Dorsolateral prefrontal cortex (tissue), 120 donors: ENCODE measurements at regions of chr19 and their contacts with region 1.

Region 1: DNA sequence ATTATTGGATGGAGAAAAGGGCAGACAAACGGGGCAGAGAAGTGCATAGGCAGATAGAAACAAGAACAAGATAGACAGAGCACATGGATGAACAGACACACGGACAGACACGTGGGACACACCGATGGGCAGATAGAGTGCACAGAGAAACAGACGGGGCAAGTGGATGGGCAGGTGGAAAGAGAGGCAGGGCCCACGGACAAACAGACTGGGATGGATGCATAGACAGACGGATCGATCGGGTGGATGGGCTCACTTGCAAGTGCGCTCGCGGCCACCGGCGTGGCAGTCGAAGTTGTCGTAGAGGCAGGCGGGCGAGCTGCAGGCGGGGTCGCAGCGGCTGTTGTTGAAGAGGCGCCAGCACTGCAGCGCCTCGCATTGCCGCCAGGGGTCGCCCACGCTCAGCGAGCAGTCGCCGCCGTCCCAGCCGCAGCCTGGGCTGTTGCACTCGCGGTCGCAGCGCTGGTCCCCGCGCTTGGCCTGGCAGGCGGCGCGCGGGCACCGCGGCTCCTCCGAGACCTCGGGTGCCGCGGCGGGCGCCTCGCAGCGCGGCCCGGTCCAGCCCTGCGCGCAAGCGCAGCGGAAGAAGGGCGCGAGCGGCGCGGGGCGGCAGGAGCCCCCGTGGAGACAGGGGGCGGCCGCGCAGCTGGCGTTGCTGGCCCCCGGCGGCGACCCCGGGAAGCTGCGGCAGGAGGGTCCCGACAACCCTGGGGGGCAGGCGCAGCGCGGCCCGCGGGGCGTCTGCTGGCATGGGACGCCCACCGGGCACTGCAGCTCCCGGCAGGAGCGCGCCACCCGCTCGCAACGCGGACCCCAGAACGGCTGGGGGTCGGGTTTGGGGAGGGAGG is 23.3 kb downstream of the NOTCH3 start:
- DNase-seq: peak; percentile 61 to 88 (median 74)
- H3K4me3 ChIP-seq: peak overlapping the region in 50 of 59 donors; percentile 14 to 61 (median 40)
- H3K27ac ChIP-seq: no peak overlapping the region
- H3K27me3 ChIP-seq: no peaks in the 10 kb centered on the region
- CTCF ChIP-seq: peak; percentile 67 to 99 (median 96)

Region 2: GRCh38 chr19:15062036-15062435 is 115.5 kb before region 1 on chr19:
- intact Hi-C with region 1: no loop called
- DNase-seq: no peak
- H3K4me3 ChIP-seq: no peak overlapping the region
- H3K27ac ChIP-seq: no peak overlapping the region
- H3K27me3 ChIP-seq: peaks cover 0 to 20% (median 3%) of the 10 kb centered on the region in 45 donors
- CTCF ChIP-seq: no peak

Region 3: GRCh38 chr19:15222738-15223648 is 45.5 kb after region 1 on chr19:
- intact Hi-C with region 1: loop called in 1 of 2 experiments (anchors 5 kb)
- DNase-seq: peak; percentile 78 to 95 (median 89)
- H3K4me3 ChIP-seq: peak overlapping the region; percentile 49 to 86 (median 75)
- H3K27ac ChIP-seq: peak overlapping the region in 31 of 59 donors; percentile 2 to 85 (median 69)
- H3K27me3 ChIP-seq: no peaks in the 10 kb centered on the region
- CTCF ChIP-seq: peak in 1 of 56 donors; percentile 12

Region 4: DNA sequence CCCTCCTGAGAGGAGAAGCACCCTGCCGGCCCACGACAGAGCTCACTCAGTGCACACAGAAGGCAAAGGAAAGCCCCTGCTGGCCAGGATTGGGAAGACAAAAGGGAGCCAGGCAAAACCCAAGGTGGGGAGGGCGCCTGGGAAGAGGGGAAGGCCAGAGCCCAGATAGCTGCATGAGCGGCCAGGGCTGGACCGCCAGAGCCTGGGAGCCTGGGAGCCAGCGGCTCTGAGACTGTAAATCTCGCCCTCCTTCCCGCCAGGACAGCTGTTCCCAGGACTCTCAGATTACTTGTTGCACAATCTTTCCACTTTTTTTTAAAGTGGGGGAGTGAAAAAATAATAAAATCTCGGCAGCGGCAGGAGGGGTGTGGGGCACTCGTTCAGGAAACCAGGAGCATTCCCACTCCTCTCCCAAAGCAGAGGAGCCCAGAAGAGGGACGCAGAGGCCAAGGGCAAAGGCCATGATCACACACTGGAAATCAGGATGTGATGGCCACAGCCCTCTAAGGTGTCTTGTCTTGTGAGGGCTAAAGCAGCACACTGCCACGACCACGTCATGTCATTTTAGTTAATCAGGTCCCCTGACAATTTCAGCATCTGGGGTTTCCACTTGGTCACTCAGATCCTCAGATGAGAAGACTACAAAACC is 74.4 kb after region 1 on chr19:
- intact Hi-C with region 1: loop called (anchors 5 kb)
- DNase-seq: peak in 2 of 10 donors; percentile 23 to 36
- H3K4me3 ChIP-seq: peak overlapping the region in 9 of 59 donors; percentile 5 to 34 (median 14)
- H3K27ac ChIP-seq: peak overlapping the region in 57 of 59 donors; percentile 8 to 90 (median 72)
- H3K27me3 ChIP-seq: no peaks in the 10 kb centered on the region
- CTCF ChIP-seq: peak in 24 of 56 donors; percentile 12 to 47 (median 26)

Region 5: DNA sequence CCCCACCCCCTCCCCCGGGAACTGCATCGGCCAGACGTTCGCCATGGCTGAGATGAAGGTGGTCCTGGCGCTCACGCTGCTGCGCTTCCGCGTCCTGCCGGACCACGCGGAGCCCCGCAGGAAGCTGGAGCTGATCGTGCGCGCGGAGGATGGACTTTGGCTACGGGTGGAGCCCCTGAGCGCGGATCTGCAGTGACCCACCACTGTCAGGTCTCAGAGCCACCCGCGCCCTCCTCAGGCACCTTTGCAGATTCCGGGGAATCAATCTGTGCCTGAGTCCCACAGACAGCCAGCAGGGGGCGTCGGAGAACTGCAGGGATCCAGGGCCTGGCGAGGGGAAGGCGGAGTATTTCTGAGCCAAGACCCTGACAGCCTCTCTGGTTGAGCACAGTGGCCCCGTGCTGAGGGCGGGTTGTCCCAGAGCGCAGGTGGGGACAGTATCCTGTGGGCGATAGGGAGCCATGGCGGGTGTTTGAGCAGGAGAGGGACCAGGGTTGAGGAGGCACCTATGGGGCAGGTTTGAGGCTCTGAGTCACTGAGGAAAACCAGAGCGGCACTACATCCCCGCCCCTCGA is 407.1 kb after region 1 on chr19:
- intact Hi-C with region 1: no loop called
- DNase-seq: peak; percentile 61 to 84 (median 75)
- H3K4me3 ChIP-seq: peak overlapping the region in 42 of 59 donors; percentile 3 to 52 (median 28)
- H3K27ac ChIP-seq: no peak overlapping the region
- H3K27me3 ChIP-seq: peaks cover 0 to 49% (median 4%) of the 10 kb centered on the region in 45 donors
- CTCF ChIP-seq: peak; percentile 45 to 92 (median 79)